Caco-2 (cell line): ENCODE measurements at regions of chr11 and their contacts with region 1.

Region 1: GRCh38 chr11:124070915-124071635 is 29.9 kb upstream of the OR10G7 start:
- DNase-seq: peak; percentile 74 to 80
- H3K4me3 ChIP-seq: no peak overlapping the region
- H3K4me3 Mint-ChIP-seq: no peak overlapping the region
- H3K27ac Mint-ChIP-seq: no peak overlapping the region
- H3K4me1 ChIP-seq: no peaks in the 10 kb centered on the region
- H3K4me1 Mint-ChIP-seq: no peaks in the 10 kb centered on the region
- H3K27me3 ChIP-seq: peaks cover 2% of the 10 kb centered on the region
- H3K27me3 Mint-ChIP-seq: peaks cover 27% of the 10 kb centered on the region
- CTCF ChIP-seq: peak; percentile 84 to 96

Region 2: GRCh38 chr11:123741159-123742028 is 329.7 kb before region 1 on chr11 and contains the start of gene ZNF202:
- CTCF ChIA-PET with region 1: no interaction called
- POLR2A ChIA-PET with region 1: no interaction called
- intact Hi-C with region 1: loop called (anchors 2 kb)
- DNase-seq: peak; percentile 95 to 96
- H3K4me3 ChIP-seq: peak within 1 kb of the TSS; percentile 85
- H3K4me3 Mint-ChIP-seq: peak within 1 kb of the TSS; percentile 85
- H3K27ac Mint-ChIP-seq: peak within 1 kb of the TSS; percentile 79
- H3K4me1 ChIP-seq: peaks cover 18% of the 10 kb centered on the region
- H3K4me1 Mint-ChIP-seq: peaks cover 6% of the 10 kb centered on the region
- H3K27me3 ChIP-seq: no peaks in the 10 kb centered on the region
- H3K27me3 Mint-ChIP-seq: peaks cover 10% of the 10 kb centered on the region
- CTCF ChIP-seq: peak; percentile 41 to 46
- total RNA-seq, gene ZNF202: 25.5 and 27.9 TPM in 2 replicates

Region 3: GRCh38 chr11:124194698-124195410 is 123.8 kb after region 1 on chr11:
- CTCF ChIA-PET with region 1: interaction called, 21 read pairs
- POLR2A ChIA-PET with region 1: no interaction called
- intact Hi-C with region 1: loop called (anchors 1 kb)
- DNase-seq: peak; percentile 62 to 68
- H3K4me3 ChIP-seq: no peak overlapping the region
- H3K4me3 Mint-ChIP-seq: no peak overlapping the region
- H3K27ac Mint-ChIP-seq: no peak overlapping the region
- H3K4me1 ChIP-seq: no peaks in the 10 kb centered on the region
- H3K4me1 Mint-ChIP-seq: no peaks in the 10 kb centered on the region
- H3K27me3 ChIP-seq: no peaks in the 10 kb centered on the region
- H3K27me3 Mint-ChIP-seq: peaks cover 13% of the 10 kb centered on the region
- CTCF ChIP-seq: peak; percentile 82 to 88

Region 4: DNA sequence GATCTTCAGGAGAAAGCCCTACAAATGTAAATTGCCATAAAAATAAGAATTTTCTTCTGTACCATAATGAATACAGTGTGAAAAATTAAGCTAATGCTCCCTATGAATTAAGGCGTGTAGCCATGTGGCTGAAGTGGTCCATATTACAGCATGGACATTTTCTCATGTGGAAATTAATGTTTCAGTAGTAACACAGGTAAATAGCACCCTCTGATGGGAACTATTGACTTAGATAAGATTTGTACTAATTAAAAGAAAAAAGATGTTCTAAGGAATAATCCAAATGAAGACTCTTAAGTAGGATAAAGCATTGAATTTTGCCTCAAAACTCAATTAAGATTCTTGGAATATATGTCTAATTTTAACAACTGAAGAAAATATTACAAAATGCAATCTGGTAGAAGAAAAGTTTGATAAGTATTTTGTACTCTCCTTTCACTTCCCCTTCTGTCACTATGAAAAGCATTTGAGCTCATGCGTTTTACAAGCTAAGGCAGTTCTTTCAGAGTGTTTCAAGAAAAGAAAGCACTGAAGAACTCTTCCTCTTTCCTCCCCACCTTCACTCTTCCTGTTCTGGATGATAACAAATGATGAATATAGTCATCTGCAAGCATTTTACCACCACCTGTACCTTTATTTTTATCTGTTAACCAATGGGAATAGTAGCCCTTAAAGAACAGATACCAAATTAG is 258.9 kb after region 1 on chr11:
- CTCF ChIA-PET with region 1: no interaction called
- POLR2A ChIA-PET with region 1: no interaction called
- intact Hi-C with region 1: loop called (anchors 10 kb)
- DNase-seq: no peak
- H3K4me3 ChIP-seq: no peak overlapping the region
- H3K4me3 Mint-ChIP-seq: no peak overlapping the region
- H3K27ac Mint-ChIP-seq: no peak overlapping the region
- H3K4me1 ChIP-seq: no peaks in the 10 kb centered on the region
- H3K4me1 Mint-ChIP-seq: no peaks in the 10 kb centered on the region
- H3K27me3 ChIP-seq: no peaks in the 10 kb centered on the region
- H3K27me3 Mint-ChIP-seq: peaks cover 31% of the 10 kb centered on the region
- CTCF ChIP-seq: no peak

Region 5: DNA sequence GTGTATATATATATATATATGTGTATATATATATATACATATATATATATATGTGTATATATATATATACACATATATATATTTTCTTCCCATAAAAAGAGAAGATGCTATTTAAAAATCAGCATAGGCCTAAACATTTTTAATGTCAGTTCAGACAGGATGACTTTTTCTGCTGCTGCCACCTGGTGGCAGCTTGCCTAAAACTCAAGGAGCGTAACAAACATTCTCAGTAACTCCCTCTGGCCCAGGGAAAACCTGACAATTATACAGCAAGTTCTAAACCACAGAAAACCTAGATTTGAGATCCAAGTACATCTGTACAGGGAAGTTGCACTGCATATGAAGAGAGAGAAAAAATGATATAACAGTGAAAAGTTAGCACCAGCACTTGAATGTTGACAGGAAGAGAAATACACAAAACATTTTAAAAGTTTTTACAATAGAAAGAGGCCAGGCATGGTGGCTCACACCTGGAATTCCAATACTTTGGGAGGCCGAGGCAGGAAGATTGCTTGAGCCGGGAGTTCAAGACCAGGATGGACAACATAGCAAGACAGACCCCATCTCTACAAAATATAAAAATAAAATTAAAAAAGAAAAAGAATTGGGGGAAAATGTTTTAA is 515.3 kb after region 1 on chr11:
- CTCF ChIA-PET with region 1: interaction called, 3 read pairs
- POLR2A ChIA-PET with region 1: no interaction called
- intact Hi-C with region 1: loop called (anchors 1 kb)
- DNase-seq: peak; percentile 59 to 73
- H3K4me3 ChIP-seq: no peak overlapping the region
- H3K4me3 Mint-ChIP-seq: no peak overlapping the region
- H3K27ac Mint-ChIP-seq: no peak overlapping the region
- H3K4me1 ChIP-seq: no peaks in the 10 kb centered on the region
- H3K4me1 Mint-ChIP-seq: no peaks in the 10 kb centered on the region
- H3K27me3 ChIP-seq: peaks cover 2% of the 10 kb centered on the region
- H3K27me3 Mint-ChIP-seq: peaks cover 32% of the 10 kb centered on the region
- CTCF ChIP-seq: peak; percentile 79 to 91